ENCODE measurements at regions of chr12 and their contacts with region 1.

Region 1: GRCh38 chr12:13203034-13203922 is 6.8 kb downstream of the EMP1 start:
- DNase-seq: no peak
- H3K4me3 ChIP-seq: no peak overlapping the region
- H3K27ac ChIP-seq: peak overlapping the region; percentile 0
- H3K4me1 ChIP-seq: peaks cover 90% of the 10 kb centered on the region
- H3K27me3 ChIP-seq: no peaks in the 10 kb centered on the region
- CTCF ChIP-seq: no peak

Region 2: GRCh38 chr12:13124661-13125505 is 78.4 kb before region 1 on chr12:
- CTCF ChIA-PET with region 1: no interaction called
- dilution Hi-C with region 1: no loop called
- in situ Hi-C with region 1: no loop called
- intact Hi-C with region 1: no loop called
- DNase-seq: no peak
- H3K4me3 ChIP-seq: no peak overlapping the region
- H3K27ac ChIP-seq: no peak overlapping the region
- H3K4me1 ChIP-seq: peaks cover 21% of the 10 kb centered on the region
- H3K27me3 ChIP-seq: no peaks in the 10 kb centered on the region
- CTCF ChIP-seq: no peak

Region 3: GRCh38 chr12:13165617-13166041 is 37.6 kb before region 1 on chr12:
- CTCF ChIA-PET with region 1: no interaction called
- dilution Hi-C with region 1: no loop called
- in situ Hi-C with region 1: no loop called
- intact Hi-C with region 1: loop called (anchors 2 kb)
- DNase-seq: peak; percentile 99
- H3K4me3 ChIP-seq: no peak overlapping the region
- H3K27ac ChIP-seq: peak overlapping the region; percentile 96
- H3K4me1 ChIP-seq: peaks cover 47% of the 10 kb centered on the region
- H3K27me3 ChIP-seq: no peaks in the 10 kb centered on the region
- CTCF ChIP-seq: no peak

Region 4: GRCh38 chr12:13250416-13250815 is 47.1 kb after region 1 on chr12:
- CTCF ChIA-PET with region 1: no interaction called
- dilution Hi-C with region 1: loop called (anchors 5 kb)
- in situ Hi-C with region 1: no loop called
- intact Hi-C with region 1: loop called (anchors 10 kb)
- DNase-seq: peak; percentile 83
- H3K4me3 ChIP-seq: no peak overlapping the region
- H3K27ac ChIP-seq: peak overlapping the region; percentile 17
- H3K4me1 ChIP-seq: peaks cover 32% of the 10 kb centered on the region
- H3K27me3 ChIP-seq: no peaks in the 10 kb centered on the region
- CTCF ChIP-seq: no peak

Measured in mammary epithelial cell (primary cell).